ENCODE measurements at regions of chr20 and their contacts with region 1.

Region 1: GRCh38 chr20:17898548-17898994 is 70.0 kb downstream of the SNX5 start:
- DNase-seq: peak; percentile 41 to 75
- ATAC-seq: peak in 5 of 8 donors; percentile 36 to 54 (median 42)
- H3K4me3 ChIP-seq: no peak overlapping the region
- H3K27ac ChIP-seq: no peak overlapping the region
- H3K4me1 ChIP-seq: peaks cover 6 to 44% (median 35%) of the 10 kb centered on the region in 9 donors
- H3K27me3 ChIP-seq: no peaks in the 10 kb centered on the region
- CTCF ChIP-seq: peak; percentile 83 to 97 (median 95)

Region 2: DNA sequence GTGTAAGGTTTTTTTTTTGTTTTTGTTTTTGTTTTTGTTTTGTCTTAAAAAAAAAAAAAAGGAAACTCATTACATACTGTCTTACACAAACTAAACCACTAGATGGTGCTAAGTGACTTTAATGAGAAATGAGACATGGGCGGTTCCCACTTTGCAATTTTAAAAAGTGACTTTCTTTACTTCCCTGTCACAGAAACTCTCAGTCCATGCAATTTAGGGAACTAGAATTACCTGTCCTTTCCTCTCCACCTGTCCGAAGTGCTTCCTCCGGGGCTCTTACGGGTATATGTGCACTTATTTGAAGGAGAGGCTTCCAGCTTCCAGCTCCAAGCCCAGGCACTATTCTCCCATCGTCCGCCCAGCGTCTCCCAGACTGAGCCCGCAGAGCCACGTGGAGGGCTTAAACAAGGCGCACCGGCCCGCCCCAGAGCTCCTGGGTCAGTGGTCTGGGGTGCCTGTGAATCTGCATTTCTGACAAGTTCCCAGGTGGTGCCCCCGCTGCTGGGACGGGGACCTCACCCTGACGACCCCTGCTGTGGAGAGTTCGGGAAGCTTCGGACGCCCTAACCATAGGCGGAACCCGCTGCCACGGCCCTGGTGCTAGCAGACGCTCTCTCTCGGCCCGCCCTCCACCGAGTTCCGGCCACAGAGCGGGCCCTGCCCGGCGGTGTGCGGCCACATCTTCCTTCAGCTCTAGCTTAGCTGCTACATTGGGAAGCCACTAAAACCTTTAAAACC is 393.5 kb before region 1 on chr20:
- intact Hi-C with region 1: loop called in 6 of 10 experiments (anchors 1 to 10 kb)
- DNase-seq: peak; percentile 29 to 59
- ATAC-seq: peak; percentile 78 to 91 (median 85)
- H3K4me3 ChIP-seq: peak overlapping the region in 9 of 10 donors; percentile 27 to 60 (median 57)
- H3K27ac ChIP-seq: peak overlapping the region in 7 of 10 donors; percentile 1 to 58 (median 31)
- H3K4me1 ChIP-seq: peaks cover 0 to 19% (median 8%) of the 10 kb centered on the region in 9 donors
- H3K27me3 ChIP-seq: no peaks in the 10 kb centered on the region
- CTCF ChIP-seq: peak; percentile 60 to 82 (median 73)

Region 3: DNA sequence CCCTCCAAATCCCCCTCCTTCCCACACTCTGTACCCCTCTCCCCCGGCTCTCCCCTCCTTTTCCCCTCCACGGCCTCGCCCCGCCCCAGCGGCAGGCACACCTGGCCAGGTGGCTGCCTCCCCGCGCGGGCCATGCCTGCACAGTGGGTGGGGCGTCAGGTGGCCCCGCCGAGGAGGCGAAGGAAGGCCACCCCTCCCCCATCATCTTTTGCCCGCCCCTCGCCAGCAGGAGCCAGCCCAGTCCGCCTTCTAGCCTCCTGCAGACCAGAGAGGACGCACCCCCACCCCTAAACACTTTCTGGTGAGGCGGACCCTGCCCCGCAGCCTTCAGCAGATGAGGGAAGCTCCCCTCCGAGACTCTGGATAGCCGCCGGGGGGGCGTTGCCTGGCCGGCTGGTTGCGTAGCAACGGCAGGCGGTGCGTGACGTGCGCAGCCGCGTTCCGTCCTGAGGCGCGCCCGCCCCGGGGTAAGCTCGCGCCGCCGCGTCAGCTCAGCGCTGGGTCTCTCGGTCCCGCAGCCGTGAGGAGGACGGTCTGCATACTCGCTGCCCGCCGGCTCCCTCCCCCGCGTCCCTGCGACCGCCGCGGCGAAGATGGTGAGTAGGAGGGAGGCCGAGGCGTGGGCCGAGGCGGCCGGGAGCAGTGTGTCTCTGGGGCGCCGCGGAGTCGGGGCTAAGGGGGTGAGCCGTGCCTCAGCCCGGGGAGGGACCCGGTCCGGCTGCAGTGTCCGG is 328.8 kb before region 1 on chr20 and contains the start of gene DSTN:
- intact Hi-C with region 1: no loop called
- DNase-seq: peak; percentile 92 to 94
- ATAC-seq: peak; percentile 91 to 96 (median 94)
- H3K4me3 ChIP-seq: peak within 1 kb of the TSS; percentile 81 to 99 (median 96)
- H3K27ac ChIP-seq: peak within 1 kb of the TSS; percentile 95 to 100 (median 99)
- H3K4me1 ChIP-seq: peaks cover 4 to 55% (median 49%) of the 10 kb centered on the region in 9 donors
- H3K27me3 ChIP-seq: no peaks in the 10 kb centered on the region
- CTCF ChIP-seq: no peak
- total RNA-seq, gene DSTN: 353 to 802 (median 569) TPM

Region 4: GRCh38 chr20:17654649-17655285 is 243.8 kb before region 1 on chr20:
- intact Hi-C with region 1: loop called in 1 of 10 experiments (anchors 5 kb)
- DNase-seq: peak in 1 of 2 donors; percentile 46
- ATAC-seq: peak in 1 of 8 donors; percentile 9
- H3K4me3 ChIP-seq: no peak overlapping the region
- H3K27ac ChIP-seq: no peak overlapping the region
- H3K4me1 ChIP-seq: peaks cover 0 to 52% (median 31%) of the 10 kb centered on the region in 9 donors
- H3K27me3 ChIP-seq: no peaks in the 10 kb centered on the region
- CTCF ChIP-seq: peak in 8 of 9 donors; percentile 41 to 77 (median 68)

Region 5: GRCh38 chr20:17806739-17807441 is 91.7 kb before region 1 on chr20:
- intact Hi-C with region 1: loop called in 3 of 10 experiments (anchors 1 to 10 kb)
- DNase-seq: peak; percentile 83 to 88
- ATAC-seq: peak; percentile 92 to 96 (median 92)
- H3K4me3 ChIP-seq: peak overlapping the region in 4 of 10 donors; percentile 12 to 31 (median 14)
- H3K27ac ChIP-seq: peak overlapping the region; percentile 3 to 90 (median 76)
- H3K4me1 ChIP-seq: peaks cover 8 to 58% (median 43%) of the 10 kb centered on the region in 9 donors
- H3K27me3 ChIP-seq: no peaks in the 10 kb centered on the region
- CTCF ChIP-seq: peak in 3 of 9 donors; percentile 8 to 22 (median 17)

Region 6: DNA sequence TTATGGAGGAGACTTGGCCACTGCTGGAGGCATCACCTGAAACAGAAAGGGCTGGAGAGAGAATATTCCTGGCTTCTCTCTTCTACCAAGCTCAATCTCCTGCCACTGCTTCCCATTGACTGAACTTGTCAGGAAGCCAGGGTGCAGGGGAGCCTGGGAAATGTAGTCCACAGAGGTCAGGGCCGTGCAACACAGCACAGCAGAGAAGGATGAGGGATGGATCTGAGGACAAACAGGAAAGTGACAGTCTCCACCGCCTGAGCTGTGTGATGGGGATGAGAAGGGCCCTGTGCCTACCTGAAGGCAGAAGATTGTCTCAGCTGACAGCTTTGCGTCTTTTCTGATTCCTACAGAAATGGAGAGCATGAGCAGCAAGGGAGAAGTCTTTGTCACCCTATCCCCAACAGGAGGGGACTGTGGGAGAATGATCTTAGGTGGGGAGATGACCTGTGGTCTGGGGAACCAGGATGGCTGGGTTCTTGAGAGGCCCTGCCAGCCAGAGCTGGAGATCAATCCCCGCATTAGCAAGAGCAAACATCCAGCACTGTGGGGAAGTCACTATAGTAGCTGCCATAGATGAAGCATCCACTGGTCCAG is 44.2 kb before region 1 on chr20:
- intact Hi-C with region 1: loop called in 2 of 10 experiments (anchors 5 kb)
- DNase-seq: peak; percentile 56 to 77
- ATAC-seq: peak in 7 of 8 donors; percentile 32 to 66 (median 57)
- H3K4me3 ChIP-seq: no peak overlapping the region
- H3K27ac ChIP-seq: no peak overlapping the region
- H3K4me1 ChIP-seq: peaks cover 0 to 28% (median 17%) of the 10 kb centered on the region in 9 donors
- H3K27me3 ChIP-seq: no peaks in the 10 kb centered on the region
- CTCF ChIP-seq: no peak

Region 7: GRCh38 chr20:17968366-17969279 is 70.1 kb after region 1 on chr20 and contains the starts of genes MGME1 and SNX5:
- intact Hi-C with region 1: loop called in 1 of 10 experiments (anchors 2 kb)
- DNase-seq: peak; percentile 100
- ATAC-seq: peak; percentile 95 to 99 (median 98)
- H3K4me3 ChIP-seq: peak within 1 kb of the TSS; percentile 75 to 97 (median 92)
- H3K27ac ChIP-seq: peak within 1 kb of the TSS; percentile 89 to 99 (median 96)
- H3K4me1 ChIP-seq: peaks cover 0 to 80% (median 77%) of the 10 kb centered on the region in 9 donors
- H3K27me3 ChIP-seq: no peaks in the 10 kb centered on the region
- CTCF ChIP-seq: peak in 2 of 9 donors; percentile 10 to 20
- total RNA-seq, gene MGME1: 9.7 to 16.0 (median 12.9) TPM
- total RNA-seq, gene SNX5: 41.6 to 59.1 (median 47.3) TPM

Measured in heart right ventricle (tissue), 16 donors.